Heart right ventricle (tissue), 16 donors: ENCODE measurements at regions of chr11 and their contacts with region 1.

Region 1: DNA sequence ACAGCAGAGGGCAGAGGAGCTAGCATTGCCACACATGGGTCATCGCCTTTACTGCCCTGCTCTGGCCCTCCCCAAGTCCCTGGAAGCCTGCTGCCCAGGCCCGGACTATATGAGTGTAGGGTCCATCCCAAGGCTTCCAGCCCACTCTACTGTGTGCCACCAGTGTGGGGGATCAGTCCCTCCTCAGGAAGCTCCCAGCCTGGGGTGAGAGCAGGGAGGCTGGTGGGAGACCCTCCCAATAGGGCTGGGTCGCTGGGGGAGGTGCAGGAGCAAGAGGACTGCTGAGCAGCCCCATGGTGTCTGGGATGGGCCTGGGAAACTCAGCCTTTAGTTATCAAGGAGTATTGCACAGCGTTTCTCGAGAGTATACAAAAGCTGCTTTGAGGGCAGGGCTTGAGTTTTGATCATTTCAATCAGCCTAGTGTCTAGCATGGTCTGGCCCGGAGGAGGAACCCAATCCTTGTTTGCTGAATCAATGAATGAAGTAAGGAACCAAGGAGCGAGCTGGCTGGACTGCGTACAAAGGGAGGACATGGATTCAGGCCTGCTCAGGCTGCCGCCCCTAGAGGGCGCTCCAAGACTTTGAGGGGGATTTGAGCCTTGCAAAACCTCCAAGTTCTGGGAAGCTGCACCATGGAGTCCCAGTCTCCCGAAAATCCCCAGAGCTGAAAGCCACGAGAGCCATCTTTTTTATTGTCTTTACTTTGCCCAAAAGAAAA is 89.0 kb upstream of the PARVA start:
- DNase-seq: peak; percentile 77 to 83
- ATAC-seq: peak; percentile 55 to 80 (median 67)
- H3K4me3 ChIP-seq: no peak overlapping the region
- H3K27ac ChIP-seq: peak overlapping the region in 8 of 10 donors; percentile 8 to 79 (median 56)
- H3K4me1 ChIP-seq: peaks cover 0 to 47% (median 20%) of the 10 kb centered on the region in 9 donors
- H3K27me3 ChIP-seq: no peaks in the 10 kb centered on the region
- CTCF ChIP-seq: peak; percentile 78 to 92 (median 87)

Region 2: GRCh38 chr11:12110201-12110713 is 178.1 kb before region 1 on chr11 and contains the start of gene MICAL2:
- intact Hi-C with region 1: no loop called
- DNase-seq: peak; percentile 90 to 92
- ATAC-seq: peak; percentile 95 to 98 (median 97)
- H3K4me3 ChIP-seq: peak within 1 kb of the TSS; percentile 72 to 97 (median 89)
- H3K27ac ChIP-seq: peak within 1 kb of the TSS; percentile 42 to 89 (median 87)
- H3K4me1 ChIP-seq: peaks cover 9 to 66% (median 41%) of the 10 kb centered on the region in 9 donors
- H3K27me3 ChIP-seq: no peaks in the 10 kb centered on the region
- CTCF ChIP-seq: no peak
- total RNA-seq, gene MICAL2: 38.1 to 95.7 (median 72.7) TPM

Region 3: GRCh38 chr11:12249590-12250260 is 38.6 kb before region 1 on chr11:
- intact Hi-C with region 1: no loop called
- DNase-seq: no peak
- ATAC-seq: no peak
- H3K4me3 ChIP-seq: no peak overlapping the region
- H3K27ac ChIP-seq: no peak overlapping the region
- H3K4me1 ChIP-seq: peaks cover 4 to 56% (median 35%) of the 10 kb centered on the region in 9 donors
- H3K27me3 ChIP-seq: no peaks in the 10 kb centered on the region
- CTCF ChIP-seq: no peak

Region 4: DNA sequence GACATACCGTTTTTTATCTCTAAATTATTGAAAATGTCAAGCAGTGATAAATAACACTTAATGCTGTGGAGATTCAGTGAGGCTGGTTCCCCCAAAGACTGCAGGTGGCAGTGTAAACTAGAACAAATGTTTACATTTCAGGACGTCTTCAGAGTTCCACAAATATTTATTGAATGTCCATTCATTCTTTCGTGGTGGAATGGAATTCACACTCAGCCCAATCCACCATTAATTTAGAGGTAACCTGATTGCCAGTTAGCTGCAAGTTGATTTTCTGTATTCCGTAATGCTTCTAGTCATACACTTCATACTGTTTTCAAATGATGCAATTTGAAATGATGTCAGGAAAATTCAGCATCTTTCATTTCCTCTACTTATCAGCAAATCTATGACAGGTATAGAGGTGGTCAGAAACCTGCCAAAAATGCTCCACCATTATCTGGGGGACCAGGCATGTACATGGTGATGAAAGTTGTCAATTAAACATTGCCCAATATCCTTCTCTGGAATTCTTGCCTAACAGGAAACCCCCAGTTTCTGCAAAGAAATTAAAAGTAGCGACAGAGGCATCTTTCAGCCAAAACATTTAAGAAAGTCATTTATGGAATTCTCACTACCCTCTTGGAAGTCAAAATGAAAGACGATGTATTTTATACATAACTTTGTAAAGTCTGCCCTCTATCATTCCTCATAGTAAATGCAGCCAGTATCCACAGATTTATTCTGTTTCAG is 894.9 kb after region 1 on chr11:
- intact Hi-C with region 1: loop called in 1 of 10 experiments (anchors 5 kb)
- DNase-seq: no peak
- ATAC-seq: peak in 7 of 8 donors; percentile 45 to 69 (median 63)
- H3K4me3 ChIP-seq: peak overlapping the region in 6 of 10 donors; percentile 8 to 29 (median 18)
- H3K27ac ChIP-seq: no peak overlapping the region
- H3K4me1 ChIP-seq: peaks cover 0 to 8% (median 5%) of the 10 kb centered on the region in 9 donors
- H3K27me3 ChIP-seq: no peaks in the 10 kb centered on the region
- CTCF ChIP-seq: peak; percentile 21 to 65 (median 47)

Region 5: DNA sequence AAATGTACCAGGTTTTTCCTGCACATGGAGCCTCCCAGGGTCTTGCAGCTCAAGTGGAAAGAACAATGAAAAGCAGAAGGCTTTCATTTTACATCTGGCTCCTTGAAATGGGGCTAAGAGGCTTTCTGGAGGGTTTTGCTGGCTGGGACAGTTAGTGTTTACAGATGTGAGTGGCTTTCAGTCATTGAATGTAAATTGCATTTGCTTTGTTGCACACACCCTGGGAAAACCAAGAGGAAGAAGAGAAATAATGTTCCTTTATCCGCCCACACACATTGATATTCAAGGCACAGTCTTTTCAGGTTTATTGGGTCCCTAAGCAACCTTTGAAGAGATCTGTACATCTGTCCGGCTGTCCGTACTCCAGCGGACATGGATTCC is 1818.7 kb after region 1 on chr11:
- intact Hi-C with region 1: no loop called
- DNase-seq: no peak
- ATAC-seq: no peak
- H3K4me3 ChIP-seq: no peak overlapping the region
- H3K27ac ChIP-seq: no peak overlapping the region
- H3K4me1 ChIP-seq: peaks cover 0 to 6% (median 0%) of the 10 kb centered on the region in 9 donors
- H3K27me3 ChIP-seq: no peaks in the 10 kb centered on the region
- CTCF ChIP-seq: no peak